ENCODE measurements at regions of chr3 and their contacts with region 1.

Region 1: DNA sequence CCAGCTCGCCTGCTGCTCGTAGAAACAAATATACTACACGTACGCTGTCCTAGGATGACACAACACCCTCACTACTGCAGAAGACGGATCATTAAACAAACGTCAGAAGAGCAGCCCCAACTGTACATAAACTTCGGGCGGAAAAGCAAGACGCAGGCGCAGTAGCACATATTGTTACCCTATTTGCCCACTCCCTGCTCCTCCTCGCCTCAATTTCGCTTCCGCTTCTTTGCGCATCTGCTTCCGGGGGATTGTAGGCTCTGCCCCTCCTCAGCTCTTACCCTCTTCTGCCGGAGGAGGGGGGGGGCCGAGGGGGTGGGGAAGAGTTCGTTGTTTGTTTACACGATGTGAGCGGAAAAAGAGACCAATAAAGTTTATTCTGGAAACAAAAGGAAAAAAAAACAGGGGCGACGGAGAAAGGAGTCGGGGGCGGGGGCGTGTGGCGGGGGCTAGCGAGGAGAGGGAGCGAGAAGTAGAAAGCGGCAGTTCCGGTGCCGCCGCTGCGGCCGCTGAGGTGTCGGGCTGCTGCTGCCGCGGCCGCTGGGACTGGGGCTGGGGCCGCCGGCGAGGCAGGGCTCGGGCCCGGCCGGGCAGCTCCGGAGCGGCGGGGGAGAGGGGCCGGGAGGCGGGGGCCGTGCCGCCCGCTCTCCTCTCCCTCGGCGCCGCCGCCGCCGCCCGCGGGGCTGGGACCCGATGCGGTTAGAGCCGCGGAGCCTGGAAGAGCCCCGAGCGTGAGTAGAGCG is at the start of gene PIK3CA:
- DNase-seq: peak; percentile 87 to 99 (median 92)
- ATAC-seq: peak; percentile 75
- H3K4me3 ChIP-seq: peak within 1 kb of the TSS; percentile 77 to 91
- H3K4me3 Mint-ChIP-seq: peak within 1 kb of the TSS; percentile 93
- H3K27ac ChIP-seq: peak within 1 kb of the TSS; percentile 93 to 94
- H3K27ac Mint-ChIP-seq: peak within 1 kb of the TSS; percentile 99
- H3K4me1 ChIP-seq: peaks cover 32% of the 10 kb centered on the region
- H3K4me1 Mint-ChIP-seq: peaks cover 39% of the 10 kb centered on the region
- H3K27me3 ChIP-seq: no peaks in the 10 kb centered on the region
- H3K27me3 Mint-ChIP-seq: no peaks in the 10 kb centered on the region
- CTCF ChIP-seq: no peak
- total RNA-seq, gene PIK3CA: 60.3 to 61.8 TPM

Region 2: GRCh38 chr3:179015551-179016020 is 132.5 kb before region 1 on chr3:
- CTCF ChIA-PET with region 1: interaction called, 11 read pairs
- POLR2A ChIA-PET with region 1: interaction called, 7 read pairs
- intact Hi-C with region 1: loop called (anchors 1 to 5 kb)
- DNase-seq: peak; percentile 26 to 87 (median 59)
- ATAC-seq: peak; percentile 98
- H3K4me3 ChIP-seq: no peak overlapping the region
- H3K4me3 Mint-ChIP-seq: no peak overlapping the region
- H3K27ac ChIP-seq: no peak overlapping the region
- H3K27ac Mint-ChIP-seq: no peak overlapping the region
- H3K4me1 ChIP-seq: peaks cover 3% of the 10 kb centered on the region
- H3K4me1 Mint-ChIP-seq: peaks cover 18% of the 10 kb centered on the region
- H3K27me3 ChIP-seq: no peaks in the 10 kb centered on the region
- H3K27me3 Mint-ChIP-seq: no peaks in the 10 kb centered on the region
- CTCF ChIP-seq: peak; percentile 84

Region 3: GRCh38 chr3:179108086-179108485 is 40.0 kb before region 1 on chr3:
- CTCF ChIA-PET with region 1: interaction called, 5 read pairs
- POLR2A ChIA-PET with region 1: no interaction called
- intact Hi-C with region 1: loop called in 1 of 2 experiments (anchors 1 kb)
- DNase-seq: no peak
- ATAC-seq: no peak
- H3K4me3 ChIP-seq: no peak overlapping the region
- H3K4me3 Mint-ChIP-seq: no peak overlapping the region
- H3K27ac ChIP-seq: no peak overlapping the region
- H3K27ac Mint-ChIP-seq: no peak overlapping the region
- H3K4me1 ChIP-seq: no peaks in the 10 kb centered on the region
- H3K4me1 Mint-ChIP-seq: peaks cover 1% of the 10 kb centered on the region
- H3K27me3 ChIP-seq: no peaks in the 10 kb centered on the region
- H3K27me3 Mint-ChIP-seq: peaks cover 4% of the 10 kb centered on the region
- CTCF ChIP-seq: no peak

Region 4: GRCh38 chr3:179196098-179196497 is 48.1 kb after region 1 on chr3:
- CTCF ChIA-PET with region 1: interaction called, 3 read pairs
- POLR2A ChIA-PET with region 1: interaction called, 9 read pairs
- intact Hi-C with region 1: loop called (anchors 1 to 2 kb)
- DNase-seq: peak in 3 of 9 experiments; percentile 23 to 66 (median 52)
- ATAC-seq: peak; percentile 66
- H3K4me3 ChIP-seq: no peak overlapping the region
- H3K4me3 Mint-ChIP-seq: no peak overlapping the region
- H3K27ac ChIP-seq: no peak overlapping the region
- H3K27ac Mint-ChIP-seq: no peak overlapping the region
- H3K4me1 ChIP-seq: peaks cover 16% of the 10 kb centered on the region
- H3K4me1 Mint-ChIP-seq: peaks cover 51% of the 10 kb centered on the region
- H3K27me3 ChIP-seq: no peaks in the 10 kb centered on the region
- H3K27me3 Mint-ChIP-seq: no peaks in the 10 kb centered on the region
- CTCF ChIP-seq: no peak

Region 5: DNA sequence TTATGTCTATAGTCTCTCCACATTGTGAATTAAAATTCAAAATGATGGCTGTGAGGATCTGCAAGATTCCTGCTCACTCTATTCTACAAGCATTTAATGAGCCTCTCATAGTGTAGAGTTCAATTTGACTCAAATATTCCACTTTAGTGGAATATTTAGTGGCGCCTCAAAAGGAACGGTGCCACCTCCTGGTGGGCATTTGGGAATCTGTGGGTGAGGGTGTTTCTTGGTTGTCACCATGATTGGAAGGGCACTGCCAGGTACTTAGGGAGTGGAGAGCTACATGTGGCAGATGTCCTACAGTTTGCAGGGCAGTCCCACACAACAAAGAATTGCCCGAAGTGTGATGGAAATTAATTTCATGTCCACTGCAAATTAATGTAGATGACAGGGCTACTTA is 124.3 kb after region 1 on chr3:
- CTCF ChIA-PET with region 1: interaction called, 5 read pairs
- POLR2A ChIA-PET with region 1: no interaction called
- intact Hi-C with region 1: loop called in 1 of 2 experiments (anchors 1 kb)
- DNase-seq: peak in 3 of 9 experiments; percentile 12 to 29 (median 15)
- ATAC-seq: no peak
- H3K4me3 ChIP-seq: no peak overlapping the region
- H3K4me3 Mint-ChIP-seq: no peak overlapping the region
- H3K27ac ChIP-seq: no peak overlapping the region
- H3K27ac Mint-ChIP-seq: no peak overlapping the region
- H3K4me1 ChIP-seq: no peaks in the 10 kb centered on the region
- H3K4me1 Mint-ChIP-seq: no peaks in the 10 kb centered on the region
- H3K27me3 ChIP-seq: no peaks in the 10 kb centered on the region
- H3K27me3 Mint-ChIP-seq: peaks cover 11% of the 10 kb centered on the region
- CTCF ChIP-seq: no peak

Region 6: GRCh38 chr3:179398574-179399231 is 250.7 kb after region 1 on chr3:
- CTCF ChIA-PET with region 1: no interaction called
- POLR2A ChIA-PET with region 1: no interaction called
- intact Hi-C with region 1: no loop called
- DNase-seq: no peak
- ATAC-seq: no peak
- H3K4me3 ChIP-seq: no peak overlapping the region
- H3K4me3 Mint-ChIP-seq: no peak overlapping the region
- H3K27ac ChIP-seq: no peak overlapping the region
- H3K27ac Mint-ChIP-seq: no peak overlapping the region
- H3K4me1 ChIP-seq: no peaks in the 10 kb centered on the region
- H3K4me1 Mint-ChIP-seq: no peaks in the 10 kb centered on the region
- H3K27me3 ChIP-seq: no peaks in the 10 kb centered on the region
- H3K27me3 Mint-ChIP-seq: no peaks in the 10 kb centered on the region
- CTCF ChIP-seq: no peak

Region 7: GRCh38 chr3:179562591-179563270 is 414.7 kb after region 1 on chr3 and contains the start of gene ACTL6A:
- CTCF ChIA-PET with region 1: no interaction called
- POLR2A ChIA-PET with region 1: interaction called, 7 read pairs
- intact Hi-C with region 1: loop called (anchors 1 to 2 kb)
- DNase-seq: peak; percentile 95 to 99 (median 98)
- ATAC-seq: peak; percentile 90
- H3K4me3 ChIP-seq: peak within 1 kb of the TSS; percentile 71 to 92
- H3K4me3 Mint-ChIP-seq: peak within 1 kb of the TSS; percentile 99
- H3K27ac ChIP-seq: peak within 1 kb of the TSS; percentile 51 to 66
- H3K27ac Mint-ChIP-seq: peak within 1 kb of the TSS; percentile 96
- H3K4me1 ChIP-seq: peaks cover 16% of the 10 kb centered on the region
- H3K4me1 Mint-ChIP-seq: peaks cover 31% of the 10 kb centered on the region
- H3K27me3 ChIP-seq: no peaks in the 10 kb centered on the region
- H3K27me3 Mint-ChIP-seq: peaks cover 3% of the 10 kb centered on the region
- CTCF ChIP-seq: no peak
- total RNA-seq, gene ACTL6A: 18.2 to 18.7 TPM

Region 8: DNA sequence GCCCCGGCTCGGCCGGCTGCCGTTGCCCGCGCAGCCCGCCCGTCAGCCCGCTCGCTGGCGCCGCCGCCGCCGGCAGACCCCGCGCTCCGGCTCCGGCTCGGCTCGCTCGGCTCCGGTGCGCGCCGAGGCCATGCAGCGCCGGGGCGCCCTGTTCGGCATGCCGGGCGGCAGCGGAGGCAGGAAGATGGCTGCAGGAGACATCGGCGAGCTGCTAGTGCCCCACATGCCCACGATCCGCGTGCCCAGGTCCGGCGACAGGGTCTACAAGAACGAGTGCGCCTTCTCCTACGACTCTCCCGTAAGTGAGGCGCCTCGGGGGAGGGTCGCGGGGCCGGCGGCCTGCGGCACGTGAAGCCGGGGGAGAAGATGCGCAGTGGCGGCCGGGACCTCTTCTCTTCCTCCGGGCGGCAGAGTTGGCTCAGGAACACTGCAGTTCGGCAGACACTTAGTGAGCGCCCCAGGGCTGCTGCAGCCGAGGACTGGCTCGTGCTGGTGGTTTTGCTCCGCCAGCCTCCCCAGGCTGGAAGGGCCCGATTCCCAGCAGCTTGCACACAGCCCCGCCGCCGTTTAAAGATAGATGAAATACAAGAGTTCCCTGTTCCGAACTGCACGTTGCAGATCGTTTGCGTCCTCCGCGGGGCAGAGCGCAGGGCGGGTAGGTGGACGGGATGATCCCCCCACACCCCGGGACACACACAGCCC is 505.2 kb after region 1 on chr3:
- CTCF ChIA-PET with region 1: no interaction called
- POLR2A ChIA-PET with region 1: no interaction called
- intact Hi-C with region 1: loop called in 1 of 2 experiments (anchors 5 kb)
- DNase-seq: peak; percentile 15 to 79 (median 64)
- ATAC-seq: peak; percentile 62
- H3K4me3 ChIP-seq: peak overlapping the region; percentile 78 to 93
- H3K4me3 Mint-ChIP-seq: peak overlapping the region; percentile 92
- H3K27ac ChIP-seq: peak overlapping the region; percentile 67 to 69
- H3K27ac Mint-ChIP-seq: peak overlapping the region; percentile 90
- H3K4me1 ChIP-seq: peaks cover 6% of the 10 kb centered on the region
- H3K4me1 Mint-ChIP-seq: peaks cover 31% of the 10 kb centered on the region
- H3K27me3 ChIP-seq: no peaks in the 10 kb centered on the region
- H3K27me3 Mint-ChIP-seq: no peaks in the 10 kb centered on the region
- CTCF ChIP-seq: no peak